Esophagus muscularis mucosa (tissue), 4 donors: ENCODE measurements at regions of chr20 and their contacts with region 1.

Region 1: GRCh38 chr20:4244700-4245485 is 229.5 kb upstream of the RNF24 start:
- DNase-seq: no peak
- H3K4me3 ChIP-seq: no peak overlapping the region
- H3K27ac ChIP-seq: no peak overlapping the region
- H3K4me1 ChIP-seq: peaks cover 0 to 17% (median 10%) of the 10 kb centered on the region in 4 donors
- H3K27me3 ChIP-seq: peaks cover 0 to 67% (median 28%) of the 10 kb centered on the region in 4 donors
- CTCF ChIP-seq: no peak
- EP300 ChIP-seq: no peak
- POLR2A ChIP-seq: no peak

Region 2: GRCh38 chr20:4592316-4593148 is 347.6 kb after region 1 on chr20:
- intact Hi-C with region 1: loop called (anchors 2 kb)
- DNase-seq: no peak
- H3K4me3 ChIP-seq: peak overlapping the region; percentile 41 to 55 (median 44)
- H3K27ac ChIP-seq: no peak overlapping the region
- H3K4me1 ChIP-seq: peaks cover 7 to 14% (median 10%) of the 10 kb centered on the region in 4 donors
- H3K27me3 ChIP-seq: peaks cover 0 to 12% (median 0%) of the 10 kb centered on the region in 4 donors
- CTCF ChIP-seq: peak; percentile 75 to 95 (median 90)
- EP300 ChIP-seq: no peak
- POLR2A ChIP-seq: no peak